Heart left ventricle (tissue), 16 donors: ENCODE measurements at regions of chr9 and their contacts with region 1.

Region 1: GRCh38 chr9:35790385-35791296 is 750 bp upstream of the NPR2 start:
- DNase-seq: peak; percentile 68 to 82 (median 75)
- ATAC-seq: peak; percentile 81 to 92 (median 88)
- H3K4me3 ChIP-seq: peak overlapping the region in 11 of 12 donors; percentile 63 to 96 (median 68)
- H3K27ac ChIP-seq: peak overlapping the region; percentile 27 to 88 (median 82)
- H3K4me1 ChIP-seq: peaks cover 0 to 46% (median 30%) of the 10 kb centered on the region in 12 donors
- H3K27me3 ChIP-seq: peaks cover 0 to 7% (median 0%) of the 10 kb centered on the region in 9 donors
- CTCF ChIP-seq: peak; percentile 75 to 92 (median 84)
- POLR2A ChIP-seq: no peak

Region 2: GRCh38 chr9:35814841-35815543 is 24.4 kb after region 1 on chr9 and contains the start of gene HINT2:
- intact Hi-C with region 1: loop called in 4 of 10 experiments (anchors 1 to 2 kb)
- DNase-seq: peak; percentile 96 to 98 (median 97)
- ATAC-seq: peak; percentile 93 to 95 (median 93)
- H3K4me3 ChIP-seq: peak within 1 kb of the TSS; percentile 67 to 99 (median 85)
- H3K27ac ChIP-seq: peak within 1 kb of the TSS; percentile 89 to 100 (median 98)
- H3K4me1 ChIP-seq: peaks cover 5 to 40% (median 31%) of the 10 kb centered on the region in 12 donors
- H3K27me3 ChIP-seq: no peaks in the 10 kb centered on the region
- CTCF ChIP-seq: peak in 1 of 12 donors; percentile 5
- POLR2A ChIP-seq: peak; percentile 86 to 97
- total RNA-seq, gene HINT2: 48.7 to 77.5 (median 57.4) TPM

Region 3: DNA sequence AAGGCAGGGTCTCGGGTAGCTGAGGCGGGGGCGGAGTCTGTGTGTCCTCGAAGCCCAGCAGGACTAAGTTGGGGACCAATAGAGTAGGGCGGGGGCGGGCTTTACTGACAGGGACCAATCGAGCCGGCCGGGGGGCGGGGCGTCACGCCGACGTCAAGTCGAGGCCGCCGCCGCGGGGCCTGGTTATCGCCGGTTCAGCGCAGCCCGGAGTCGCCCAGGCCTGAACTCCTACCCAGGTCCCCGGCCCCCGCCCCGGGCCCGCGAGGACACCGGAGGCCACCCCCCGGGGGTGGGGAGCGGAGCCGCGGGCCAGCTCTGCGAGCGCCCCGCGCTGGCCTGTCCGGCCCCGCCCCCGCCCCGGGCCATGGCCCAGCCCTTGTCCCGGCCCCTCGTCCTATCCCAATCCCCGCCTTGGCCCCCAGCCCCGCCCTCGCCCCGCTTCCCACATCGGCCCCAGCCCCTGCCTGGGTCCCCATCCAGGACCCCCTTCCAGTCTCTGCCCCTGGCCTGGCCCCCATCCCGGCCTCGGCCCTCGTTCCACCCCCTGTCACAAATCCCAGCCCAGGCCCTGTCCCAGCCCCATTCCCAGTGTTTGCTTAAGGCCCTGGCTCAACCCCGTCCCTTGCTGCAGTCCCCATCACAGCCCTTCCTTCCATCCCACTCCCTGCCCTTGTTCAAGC is 38.6 kb after region 1 on chr9 and contains the start of gene TMEM8B:
- intact Hi-C with region 1: loop called in 7 of 10 experiments (anchors 1 to 5 kb)
- DNase-seq: peak; percentile 97 to 99 (median 98)
- ATAC-seq: peak; percentile 89 to 95 (median 92)
- H3K4me3 ChIP-seq: peak within 1 kb of the TSS; percentile 65 to 97 (median 78)
- H3K27ac ChIP-seq: peak within 1 kb of the TSS; percentile 85 to 99 (median 94)
- H3K4me1 ChIP-seq: peaks cover 3 to 53% (median 39%) of the 10 kb centered on the region in 12 donors
- H3K27me3 ChIP-seq: no peaks in the 10 kb centered on the region
- CTCF ChIP-seq: no peak
- POLR2A ChIP-seq: peak in 1 of 2 donors; percentile 57
- total RNA-seq, gene TMEM8B: 10.8 to 21.4 (median 18.2) TPM

Region 4: DNA sequence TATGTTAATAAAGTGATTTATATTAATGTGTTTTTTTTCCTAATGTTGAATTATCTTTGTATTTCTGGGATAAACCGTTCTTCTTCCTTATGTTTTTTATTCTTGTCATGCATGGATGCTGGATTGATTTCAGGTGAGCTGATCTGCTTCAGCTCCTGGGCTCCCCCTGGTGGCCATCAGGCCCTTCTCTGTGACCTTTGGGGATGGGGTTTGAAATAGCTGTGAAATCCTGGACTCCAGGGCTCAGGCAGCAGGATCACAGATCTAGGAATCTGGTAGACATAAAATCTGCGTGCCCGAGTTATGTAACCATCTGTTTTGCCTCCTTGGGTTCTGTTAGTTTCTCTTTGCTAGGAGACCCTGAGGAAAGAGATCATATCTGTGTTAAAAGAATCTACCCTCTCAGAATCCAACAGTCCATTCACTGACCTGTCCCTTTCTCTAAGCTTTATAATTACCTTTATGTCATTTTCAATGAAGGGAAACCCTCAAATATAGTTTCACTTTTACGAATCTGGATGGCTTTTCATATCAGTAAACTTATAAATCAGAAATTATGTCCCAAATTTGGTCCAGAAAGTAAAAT is 91.7 kb after region 1 on chr9:
- intact Hi-C with region 1: loop called (anchors 1 to 2 kb)
- DNase-seq: peak; percentile 81 to 92 (median 82)
- ATAC-seq: peak in 3 of 4 donors; percentile 82 to 85 (median 83)
- H3K4me3 ChIP-seq: no peak overlapping the region
- H3K27ac ChIP-seq: no peak overlapping the region
- H3K4me1 ChIP-seq: no peaks in the 10 kb centered on the region
- H3K27me3 ChIP-seq: peaks cover 0 to 10% (median 0%) of the 10 kb centered on the region in 9 donors
- CTCF ChIP-seq: peak; percentile 93 to 99 (median 98)
- POLR2A ChIP-seq: no peak

Region 5: DNA sequence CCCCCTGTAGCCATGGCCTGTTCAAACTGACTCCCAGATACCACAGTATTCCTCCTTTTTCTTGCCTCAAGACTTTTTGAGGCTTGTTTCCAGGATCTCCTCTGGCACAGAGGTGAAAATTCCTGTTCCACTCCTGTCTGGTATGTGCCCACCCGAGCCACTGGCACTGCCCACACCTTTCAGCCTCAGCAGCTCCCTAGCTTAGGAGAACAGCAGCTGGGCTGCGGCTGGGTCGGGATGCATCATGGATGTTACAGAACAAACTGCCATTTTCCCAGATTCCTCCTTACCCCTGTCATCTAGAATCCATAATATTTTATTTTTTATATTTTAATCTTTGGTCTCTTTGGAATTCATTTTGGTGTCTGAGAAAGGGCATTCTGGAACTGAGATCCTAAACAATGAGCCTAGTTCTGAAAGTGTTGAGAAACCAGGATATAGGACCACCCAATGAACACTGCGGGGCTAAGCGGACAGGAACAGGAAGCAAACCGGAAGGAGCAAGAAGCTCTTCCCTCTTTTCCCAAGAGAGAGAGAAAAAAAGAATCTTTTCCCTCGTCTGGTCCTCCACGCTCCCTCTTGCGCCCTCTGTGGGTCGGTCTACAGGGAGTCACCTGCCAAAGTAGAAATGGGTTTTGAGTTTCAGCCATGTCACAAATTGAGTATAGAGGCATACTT is 154.8 kb after region 1 on chr9:
- intact Hi-C with region 1: loop called in 1 of 10 experiments (anchors 2 kb)
- DNase-seq: peak; percentile 83 to 90 (median 87)
- ATAC-seq: peak; percentile 31 to 83 (median 80)
- H3K4me3 ChIP-seq: peak overlapping the region in 6 of 12 donors; percentile 18 to 36 (median 26)
- H3K27ac ChIP-seq: peak overlapping the region; percentile 23 to 80 (median 64)
- H3K4me1 ChIP-seq: peaks cover 0 to 34% (median 19%) of the 10 kb centered on the region in 12 donors
- H3K27me3 ChIP-seq: no peaks in the 10 kb centered on the region
- CTCF ChIP-seq: peak; percentile 75 to 95 (median 87)
- POLR2A ChIP-seq: no peak

Region 6: GRCh38 chr9:36023260-36024048 is 232.8 kb after region 1 on chr9:
- intact Hi-C with region 1: loop called in 3 of 10 experiments (anchors 5 to 10 kb)
- DNase-seq: peak; percentile 51 to 68 (median 57)
- ATAC-seq: peak; percentile 55 to 80 (median 65)
- H3K4me3 ChIP-seq: no peak overlapping the region
- H3K27ac ChIP-seq: no peak overlapping the region
- H3K4me1 ChIP-seq: peaks cover 0 to 4% (median 0%) of the 10 kb centered on the region in 12 donors
- H3K27me3 ChIP-seq: no peaks in the 10 kb centered on the region
- CTCF ChIP-seq: peak; percentile 71 to 83 (median 80)
- POLR2A ChIP-seq: no peak